ENCODE measurements at regions of chr9 and their contacts with region 1.

Region 1: GRCh38 chr9:128438343-128439109 is 17.3 kb upstream of the ODF2 start:
- DNase-seq: peak; percentile 93
- H3K4me3 ChIP-seq: peak overlapping the region in 1 of 2 experiments; percentile 46; a peak in 1 of 4 replicates
- H3K27ac ChIP-seq: peak overlapping the region in 1 of 2 experiments; percentile 23; a peak in 1 of 4 replicates
- H3K4me1 ChIP-seq: peaks cover 0 to 4% of the 10 kb centered on the region in 2 experiments; a peak in 1 of 4 replicates
- H3K27me3 ChIP-seq: no peaks in the 10 kb centered on the region
- CTCF ChIP-seq: peak; percentile 91
- EP300 ChIP-seq: no peak
- RAD21 ChIP-seq: peak; percentile 71

Region 2: GRCh38 chr9:128262687-128263086 is 175.8 kb before region 1 on chr9:
- CTCF ChIA-PET with region 1: no interaction called
- POLR2A ChIA-PET with region 1: no interaction called
- DNase-seq: no peak
- H3K4me3 ChIP-seq: no peak overlapping the region
- H3K27ac ChIP-seq: no peak overlapping the region
- H3K4me1 ChIP-seq: no peaks in the 10 kb centered on the region
- H3K27me3 ChIP-seq: no peaks in the 10 kb centered on the region
- CTCF ChIP-seq: no peak
- EP300 ChIP-seq: no peak
- RAD21 ChIP-seq: no peak

Region 3: GRCh38 chr9:128361986-128362646 is 76.4 kb before region 1 on chr9:
- CTCF ChIA-PET with region 1: interaction called, 10 read pairs
- POLR2A ChIA-PET with region 1: no interaction called
- DNase-seq: peak; percentile 92
- H3K4me3 ChIP-seq: peak overlapping the region; percentile 43 to 58
- H3K27ac ChIP-seq: peak overlapping the region; percentile 29 to 72; a peak in 3 of 4 replicates
- H3K4me1 ChIP-seq: peaks cover 7 to 8% of the 10 kb centered on the region in 2 experiments; a peak in 2 of 4 replicates
- H3K27me3 ChIP-seq: no peaks in the 10 kb centered on the region
- CTCF ChIP-seq: peak; percentile 90
- EP300 ChIP-seq: no peak
- RAD21 ChIP-seq: peak; percentile 86

Region 4: GRCh38 chr9:128412120-128412790 is 26.3 kb before region 1 on chr9:
- CTCF ChIA-PET with region 1: interaction called, 10 read pairs
- POLR2A ChIA-PET with region 1: no interaction called
- DNase-seq: peak; percentile 87
- H3K4me3 ChIP-seq: peak overlapping the region in 1 of 2 experiments; percentile 50; a peak in 1 of 4 replicates
- H3K27ac ChIP-seq: no peak overlapping the region
- H3K4me1 ChIP-seq: peaks cover 0 to 2% of the 10 kb centered on the region in 2 experiments; a peak in 1 of 4 replicates
- H3K27me3 ChIP-seq: no peaks in the 10 kb centered on the region; the same call in 1 of the 2 replicates
- CTCF ChIP-seq: peak; percentile 69
- EP300 ChIP-seq: no peak
- RAD21 ChIP-seq: peak; percentile 88

Region 5: GRCh38 chr9:128420060-128420650 is 18.4 kb before region 1 on chr9:
- CTCF ChIA-PET with region 1: interaction called, 93 read pairs
- POLR2A ChIA-PET with region 1: interaction called, 3 read pairs
- DNase-seq: peak; percentile 96
- H3K4me3 ChIP-seq: peak overlapping the region; percentile 73 to 86
- H3K27ac ChIP-seq: peak overlapping the region; percentile 59 to 81
- H3K4me1 ChIP-seq: peaks cover 0 to 17% of the 10 kb centered on the region in 2 experiments; a peak in 1 of 4 replicates
- H3K27me3 ChIP-seq: no peaks in the 10 kb centered on the region; the same call in 1 of the 2 replicates
- CTCF ChIP-seq: peak; percentile 87
- EP300 ChIP-seq: no peak; a peak in 1 of 4 replicates
- RAD21 ChIP-seq: peak; percentile 18; the same call in 1 of the 2 replicates

Region 6: GRCh38 chr9:128448746-128449145 is 10.2 kb after region 1 on chr9:
- CTCF ChIA-PET with region 1: interaction called, 31 read pairs
- POLR2A ChIA-PET with region 1: no interaction called
- DNase-seq: no peak
- H3K4me3 ChIP-seq: no peak overlapping the region
- H3K27ac ChIP-seq: no peak overlapping the region
- H3K4me1 ChIP-seq: no peaks in the 10 kb centered on the region
- H3K27me3 ChIP-seq: no peaks in the 10 kb centered on the region
- CTCF ChIP-seq: no peak
- EP300 ChIP-seq: no peak
- RAD21 ChIP-seq: no peak

Region 7: DNA sequence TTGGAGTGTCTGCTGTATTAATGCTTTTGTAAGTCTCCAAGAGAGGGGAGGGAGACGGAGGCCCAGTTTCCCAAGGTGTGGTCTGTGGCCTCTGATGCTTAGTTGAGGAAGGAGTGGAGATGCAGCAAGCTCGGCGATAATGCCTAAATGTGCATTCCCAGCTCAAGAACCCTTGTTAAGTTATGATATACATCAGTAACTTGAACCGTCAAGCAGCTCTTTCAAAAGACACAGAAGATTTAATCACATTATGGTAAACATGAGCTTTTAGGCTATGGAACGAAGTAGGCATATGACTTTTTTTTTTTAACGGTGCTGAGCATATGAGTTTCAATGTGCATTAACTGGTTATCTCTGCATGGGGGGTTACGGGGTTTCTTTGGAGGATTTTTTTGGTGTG is 43.6 kb after region 1 on chr9:
- CTCF ChIA-PET with region 1: interaction called, 11 read pairs
- POLR2A ChIA-PET with region 1: no interaction called
- DNase-seq: no peak
- H3K4me3 ChIP-seq: no peak overlapping the region
- H3K27ac ChIP-seq: no peak overlapping the region
- H3K4me1 ChIP-seq: no peaks in the 10 kb centered on the region
- H3K27me3 ChIP-seq: no peaks in the 10 kb centered on the region
- CTCF ChIP-seq: no peak
- EP300 ChIP-seq: no peak
- RAD21 ChIP-seq: no peak

Region 8: DNA sequence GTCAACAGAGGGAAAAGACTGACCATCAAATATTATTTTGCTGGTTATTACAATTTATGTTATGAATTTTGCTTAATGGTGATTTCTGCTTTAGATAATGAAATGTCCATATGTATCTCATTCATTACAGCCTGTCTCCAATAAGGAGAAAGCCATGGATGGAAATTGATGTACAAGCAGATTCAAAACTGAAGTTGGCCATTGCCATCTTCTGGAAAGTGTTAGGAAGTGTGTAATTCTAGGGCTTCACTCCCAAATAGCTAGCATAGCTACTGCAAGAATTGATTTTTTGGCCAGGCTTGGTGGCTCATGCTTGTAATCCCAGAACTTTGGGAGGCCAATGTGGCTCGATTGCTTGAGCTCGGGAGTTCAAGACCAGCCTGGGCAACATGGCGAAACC is 172.4 kb after region 1 on chr9:
- CTCF ChIA-PET with region 1: interaction called, 12 read pairs
- POLR2A ChIA-PET with region 1: no interaction called
- DNase-seq: no peak
- H3K4me3 ChIP-seq: no peak overlapping the region
- H3K27ac ChIP-seq: no peak overlapping the region
- H3K4me1 ChIP-seq: no peaks in the 10 kb centered on the region
- H3K27me3 ChIP-seq: no peaks in the 10 kb centered on the region
- CTCF ChIP-seq: no peak
- EP300 ChIP-seq: no peak
- RAD21 ChIP-seq: peak; percentile 32; the same call in 1 of the 2 replicates

Measured in SK-N-SH (cell line).